Left colon (tissue), 2 donors: ENCODE measurements at regions of chr9 and their contacts with region 1.

Region 1: GRCh38 chr9:101727612-101728524 is 10.6 kb downstream of the GRIN3A start:
- DNase-seq: peak in 1 of 2 donors; percentile 15
- ATAC-seq: peak; percentile 64

Region 2: GRCh38 chr9:101601904-101602765 is 125.7 kb before region 1 on chr9:
- intact Hi-C with region 1: loop called in 1 of 2 experiments (anchors 5 kb)
- DNase-seq: no peak
- ATAC-seq: peak; percentile 63

Region 3: GRCh38 chr9:101639785-101640665 is 87.8 kb before region 1 on chr9:
- intact Hi-C with region 1: no loop called
- DNase-seq: no peak
- ATAC-seq: peak; percentile 55